GM12878 (cell line): ENCODE measurements at regions of chr12 and their contacts with region 1.

Region 1: GRCh38 chr12:31267966-31268365 is 58.0 kb downstream of the SINHCAF start:
- DNase-seq: no peak
- ATAC-seq: no peak
- H3K4me3 ChIP-seq: no peak overlapping the region
- H3K27ac ChIP-seq: no peak overlapping the region
- H3K4me1 ChIP-seq: no peaks in the 10 kb centered on the region
- H3K27me3 ChIP-seq: no peaks in the 10 kb centered on the region
- CTCF ChIP-seq: no peak
- EP300 ChIP-seq: no peak
- POLR2A ChIP-seq: no peak
- RAD21 ChIP-seq: no peak

Region 2: GRCh38 chr12:30847259-30847658 is 420.7 kb before region 1 on chr12:
- CTCF ChIA-PET with region 1: interaction called, 27 read pairs
- POLR2A ChIA-PET with region 1: no interaction called
- RAD21 ChIA-PET with region 1: interaction called, 10 read pairs
- SMC1A ChIA-PET with region 1: interaction called, 15 read pairs
- in situ Hi-C with region 1: no loop called
- intact Hi-C with region 1: loop called (anchors 2 kb)
- DNase-seq: peak; percentile 28
- ATAC-seq: peak; percentile 53
- H3K4me3 ChIP-seq: no peak overlapping the region
- H3K27ac ChIP-seq: no peak overlapping the region
- H3K4me1 ChIP-seq: peaks cover 3% of the 10 kb centered on the region
- H3K27me3 ChIP-seq: no peaks in the 10 kb centered on the region
- CTCF ChIP-seq: peak; percentile 58 to 72 (median 60); a peak in 5 of 6 replicates
- EP300 ChIP-seq: no peak
- POLR2A ChIP-seq: no peak
- RAD21 ChIP-seq: peak; percentile 91

Region 3: GRCh38 chr12:31245822-31246469 is 22.0 kb before region 1 on chr12:
- CTCF ChIA-PET with region 1: interaction called, 140 read pairs
- POLR2A ChIA-PET with region 1: no interaction called
- RAD21 ChIA-PET with region 1: interaction called, 22 read pairs
- SMC1A ChIA-PET with region 1: interaction called, 22 read pairs
- in situ Hi-C with region 1: no loop called
- intact Hi-C with region 1: no loop called
- DNase-seq: no peak
- ATAC-seq: peak; percentile 60
- H3K4me3 ChIP-seq: no peak overlapping the region
- H3K27ac ChIP-seq: no peak overlapping the region
- H3K4me1 ChIP-seq: no peaks in the 10 kb centered on the region
- H3K27me3 ChIP-seq: no peaks in the 10 kb centered on the region
- CTCF ChIP-seq: peak in 2 of 3 experiments; percentile 22 to 32; a peak in 3 of 6 replicates
- EP300 ChIP-seq: no peak
- POLR2A ChIP-seq: no peak
- RAD21 ChIP-seq: no peak

Region 4: DNA sequence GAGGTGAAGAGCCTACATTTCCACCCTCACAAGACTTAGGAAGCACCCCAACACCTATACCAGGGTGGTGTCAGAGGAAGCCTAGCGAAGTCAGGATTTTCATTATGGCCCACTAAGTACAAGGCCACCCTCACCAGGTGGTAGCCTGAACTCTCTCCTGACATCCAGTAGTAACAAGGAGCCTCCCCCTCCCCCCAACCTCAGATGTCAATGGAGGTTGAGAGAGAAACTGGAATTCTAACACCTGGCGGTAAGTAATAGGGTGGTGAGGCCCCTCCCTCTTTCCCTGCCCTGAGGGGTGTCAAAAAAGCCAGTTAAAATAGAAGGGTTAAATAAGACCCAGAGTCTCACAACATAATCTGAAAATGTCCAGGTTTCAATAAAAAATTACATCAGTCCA is 20.4 kb after region 1 on chr12:
- CTCF ChIA-PET with region 1: interaction called, 30 read pairs
- POLR2A ChIA-PET with region 1: no interaction called
- RAD21 ChIA-PET with region 1: interaction called, 3 read pairs
- SMC1A ChIA-PET with region 1: interaction called, 9 read pairs
- in situ Hi-C with region 1: no loop called
- intact Hi-C with region 1: no loop called
- DNase-seq: no peak
- ATAC-seq: no peak
- H3K4me3 ChIP-seq: no peak overlapping the region
- H3K27ac ChIP-seq: no peak overlapping the region
- H3K4me1 ChIP-seq: no peaks in the 10 kb centered on the region
- H3K27me3 ChIP-seq: no peaks in the 10 kb centered on the region
- CTCF ChIP-seq: no peak
- EP300 ChIP-seq: no peak
- POLR2A ChIP-seq: no peak
- RAD21 ChIP-seq: no peak

Region 5: GRCh38 chr12:31306621-31307265 is 38.8 kb after region 1 on chr12:
- CTCF ChIA-PET with region 1: interaction called, 10 read pairs
- POLR2A ChIA-PET with region 1: no interaction called
- RAD21 ChIA-PET with region 1: interaction called, 4 read pairs
- SMC1A ChIA-PET with region 1: interaction called, 4 read pairs
- in situ Hi-C with region 1: no loop called
- intact Hi-C with region 1: no loop called
- DNase-seq: no peak
- ATAC-seq: peak; percentile 10; the same call in 2 of the 3 replicates
- H3K4me3 ChIP-seq: no peak overlapping the region
- H3K27ac ChIP-seq: no peak overlapping the region
- H3K4me1 ChIP-seq: 0 out of 2 replicates have a peak, but pooled peaks cover 2% of the 10 kb centered on the region
- H3K27me3 ChIP-seq: no peaks in the 10 kb centered on the region
- CTCF ChIP-seq: no peak
- EP300 ChIP-seq: no peak
- POLR2A ChIP-seq: no peak
- RAD21 ChIP-seq: no peak

Region 6: GRCh38 chr12:31324116-31324844 is 56.3 kb after region 1 on chr12:
- CTCF ChIA-PET with region 1: interaction called, 26 read pairs
- POLR2A ChIA-PET with region 1: interaction called, 3 read pairs
- RAD21 ChIA-PET with region 1: interaction called, 6 read pairs
- SMC1A ChIA-PET with region 1: interaction called, 21 read pairs
- in situ Hi-C with region 1: no loop called
- intact Hi-C with region 1: no loop called
- DNase-seq: no peak
- ATAC-seq: peak; percentile 60
- H3K4me3 ChIP-seq: peak overlapping the region; percentile 92
- H3K27ac ChIP-seq: peak overlapping the region; percentile 95
- H3K4me1 ChIP-seq: peaks cover 7% of the 10 kb centered on the region; the same call in 1 of the 2 replicates
- H3K27me3 ChIP-seq: no peaks in the 10 kb centered on the region
- CTCF ChIP-seq: peak in 2 of 3 experiments; percentile 13 to 18; a peak in 2 of 6 replicates
- EP300 ChIP-seq: no peak
- POLR2A ChIP-seq: peak; percentile 76
- RAD21 ChIP-seq: no peak